Spleen (tissue), 13 donors: ENCODE measurements at regions of chr18 and their contacts with region 1.

Region 1: GRCh38 chr18:74196220-74197119 is 48.1 kb downstream of the TIMM21 start:
- DNase-seq: no peak
- H3K4me3 ChIP-seq: peak overlapping the region in 4 of 8 donors; percentile 17 to 60 (median 20)
- H3K27ac ChIP-seq: peak overlapping the region in 4 of 8 donors; percentile 21 to 71 (median 41)
- H3K4me1 ChIP-seq: peaks cover 0 to 20% (median 5%) of the 10 kb centered on the region in 6 donors
- H3K27me3 ChIP-seq: peaks cover 0 to 7% (median 0%) of the 10 kb centered on the region in 7 donors
- CTCF ChIP-seq: peak; percentile 82 to 95 (median 92)
- POLR2A ChIP-seq: no peak

Region 2: DNA sequence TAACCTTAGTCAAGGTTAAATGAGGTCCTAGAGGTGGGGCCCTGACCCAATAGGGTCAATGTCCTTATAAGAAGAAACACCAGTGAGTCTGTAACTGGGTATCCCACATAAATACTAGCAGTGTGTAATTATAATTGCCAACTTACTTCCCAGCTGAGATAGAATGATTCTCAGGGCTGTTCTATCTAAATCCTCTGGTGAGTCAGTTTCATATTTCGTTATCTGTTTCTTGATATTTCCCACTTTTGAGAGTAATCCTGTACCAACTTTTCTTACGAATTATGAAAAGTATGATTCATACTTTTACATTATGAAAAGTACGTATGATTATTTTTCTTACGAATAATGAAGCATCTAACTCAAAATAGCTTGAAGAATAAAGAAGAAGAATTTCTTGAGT is 781.9 kb before region 1 on chr18:
- intact Hi-C with region 1: no loop called
- DNase-seq: no peak
- H3K4me3 ChIP-seq: no peak overlapping the region
- H3K27ac ChIP-seq: no peak overlapping the region
- H3K4me1 ChIP-seq: no peaks in the 10 kb centered on the region
- H3K27me3 ChIP-seq: no peaks in the 10 kb centered on the region
- CTCF ChIP-seq: no peak
- POLR2A ChIP-seq: no peak

Region 3: DNA sequence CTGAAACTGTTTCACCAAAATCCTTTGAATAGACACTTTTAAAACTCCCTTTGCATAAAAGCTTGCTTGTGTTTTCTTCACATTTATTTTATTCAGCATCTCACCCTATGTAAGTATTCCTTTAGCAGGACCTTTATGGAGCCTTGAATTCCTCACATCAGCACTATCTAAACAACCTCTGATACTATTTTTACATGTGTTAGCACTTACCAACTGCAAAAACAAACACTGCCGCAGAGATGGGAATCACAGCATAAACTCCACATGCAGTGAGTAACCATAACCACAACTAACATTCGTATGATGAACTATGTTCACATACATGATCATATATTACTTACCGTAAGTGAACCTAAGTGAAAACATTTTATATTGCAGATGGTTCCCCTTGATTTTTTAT is 64.3 kb before region 1 on chr18:
- intact Hi-C with region 1: no loop called
- DNase-seq: no peak
- H3K4me3 ChIP-seq: no peak overlapping the region
- H3K27ac ChIP-seq: no peak overlapping the region
- H3K4me1 ChIP-seq: no peaks in the 10 kb centered on the region
- H3K27me3 ChIP-seq: no peaks in the 10 kb centered on the region
- CTCF ChIP-seq: no peak
- POLR2A ChIP-seq: no peak

Region 4: GRCh38 chr18:74342416-74343043 is 146.1 kb after region 1 on chr18:
- intact Hi-C with region 1: loop called (anchors 5 kb)
- DNase-seq: no peak
- H3K4me3 ChIP-seq: no peak overlapping the region
- H3K27ac ChIP-seq: no peak overlapping the region
- H3K4me1 ChIP-seq: no peaks in the 10 kb centered on the region
- H3K27me3 ChIP-seq: no peaks in the 10 kb centered on the region
- CTCF ChIP-seq: peak; percentile 47 to 80 (median 64)
- POLR2A ChIP-seq: no peak